ENCODE measurements at regions of chr3 and their contacts with region 1.

Region 1: DNA sequence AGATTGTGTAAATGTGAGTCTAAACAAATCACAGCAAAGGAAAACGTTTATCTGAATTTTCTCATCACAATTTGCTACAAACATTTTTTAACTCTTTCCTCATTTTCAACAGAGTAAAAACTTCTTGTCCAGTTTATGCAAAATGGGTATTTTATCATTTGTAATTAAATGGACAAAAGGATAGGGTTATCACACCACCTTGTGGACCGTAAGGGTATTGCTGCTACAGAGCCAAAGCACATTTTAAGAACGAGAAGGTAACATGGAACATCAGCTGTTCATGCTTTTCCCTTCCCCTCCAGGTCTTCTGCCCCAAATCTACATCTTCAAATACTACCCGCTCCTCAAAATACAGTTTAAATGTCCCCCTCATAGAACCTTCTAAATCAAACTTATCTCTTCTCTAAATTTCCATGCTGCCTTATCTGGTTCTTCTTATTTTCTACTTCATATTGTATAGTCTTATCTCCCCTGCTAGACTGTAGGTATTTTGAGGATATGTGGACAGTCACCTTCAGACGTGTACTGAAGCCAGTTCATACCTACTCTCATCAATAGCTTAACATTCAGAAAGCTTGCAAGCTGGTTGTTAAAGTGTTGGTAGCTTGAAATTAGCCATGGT is 12.8 kb upstream of the SETMAR start:
- DNase-seq: no peak
- H3K4me3 ChIP-seq: no peak overlapping the region
- CTCF ChIP-seq: peak; percentile 65

Region 2: GRCh38 chr3:3200632-3201212 is 1089.7 kb before region 1 on chr3:
- CTCF ChIA-PET with region 1: interaction called, 113 read pairs
- POLR2A ChIA-PET with region 1: no interaction called
- DNase-seq: no peak
- H3K4me3 ChIP-seq: no peak overlapping the region
- CTCF ChIP-seq: peak; percentile 50

Region 3: GRCh38 chr3:4279516-4280105 is 10.8 kb before region 1 on chr3:
- CTCF ChIA-PET with region 1: interaction called, 14 read pairs
- POLR2A ChIA-PET with region 1: no interaction called
- DNase-seq: no peak
- H3K4me3 ChIP-seq: no peak overlapping the region
- CTCF ChIP-seq: no peak

Region 4: GRCh38 chr3:4303187-4304123 is 13.1 kb after region 1 on chr3 and contains the start of gene SETMAR:
- CTCF ChIA-PET with region 1: interaction called, 11 read pairs
- POLR2A ChIA-PET with region 1: no interaction called
- DNase-seq: no peak
- H3K4me3 ChIP-seq: peak within 1 kb of the TSS; percentile 83
- CTCF ChIP-seq: no peak

Region 5: GRCh38 chr3:4350789-4351163 is 60.4 kb after region 1 on chr3:
- CTCF ChIA-PET with region 1: no interaction called
- POLR2A ChIA-PET with region 1: no interaction called
- DNase-seq: peak; percentile 14
- H3K4me3 ChIP-seq: no peak overlapping the region
- CTCF ChIP-seq: peak; percentile 50